Motor neuron (in vitro differentiated cells): ENCODE measurements at regions of chr2 and their contacts with region 1.

Region 1: DNA sequence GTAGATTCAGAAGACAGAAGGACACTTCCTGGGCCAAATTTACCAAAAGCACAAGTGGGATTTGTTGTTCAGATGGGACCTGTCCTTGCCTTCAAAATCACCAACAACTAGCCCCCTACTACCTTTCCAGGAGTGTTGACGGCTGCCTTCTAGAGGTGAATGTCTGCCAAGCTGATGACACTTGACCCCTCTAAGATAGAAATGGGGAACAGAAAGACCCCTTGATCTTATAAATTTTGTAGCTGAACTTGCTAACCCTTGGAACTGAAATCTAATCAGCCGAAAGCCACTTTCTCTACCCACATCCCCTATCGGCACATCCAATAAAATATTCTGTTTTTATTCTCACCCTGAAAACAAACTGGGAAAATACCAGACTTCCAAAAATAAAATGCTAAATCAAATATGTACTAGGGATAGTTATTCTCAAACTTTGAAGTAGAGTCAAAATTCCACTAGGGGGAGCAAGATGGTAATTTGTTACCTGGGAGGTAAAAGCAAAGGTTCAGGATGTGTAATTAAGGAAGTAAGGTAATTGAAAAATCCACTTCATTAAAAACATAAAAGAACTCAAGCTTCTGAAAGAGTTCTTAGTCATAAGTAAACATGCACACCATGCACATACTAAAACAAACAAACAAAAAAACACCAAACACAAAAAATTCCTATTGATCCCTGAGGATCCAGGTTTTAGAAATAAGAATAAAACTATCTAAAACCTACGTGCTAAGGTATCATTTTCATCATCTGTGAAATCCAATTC is 119.2 kb downstream of the ANKRD44 start:
- ATAC-seq: no peak
- H3K4me3 ChIP-seq: no peak overlapping the region
- H3K27ac ChIP-seq: no peak overlapping the region
- H3K4me1 ChIP-seq: no peaks in the 10 kb centered on the region

Region 2: GRCh38 chr2:197310271-197310985 is 119.1 kb after region 1 on chr2 and contains the start of gene ANKRD44:
- in situ Hi-C with region 1: loop called in 1 of 9 experiments (anchors 25 kb)
- ATAC-seq: peak; percentile 90 to 96 (median 94)
- H3K4me3 ChIP-seq: peak within 1 kb of the TSS; percentile 65 to 94 (median 83)
- H3K27ac ChIP-seq: peak within 1 kb of the TSS; percentile 57 to 66
- H3K4me1 ChIP-seq: peaks cover 8 to 11% of the 10 kb centered on the region in 2 donors
- total RNA-seq, gene ANKRD44: 3.4 to 28.8 (median 14.8) TPM

Region 3: GRCh38 chr2:197378494-197379307 is 187.3 kb after region 1 on chr2:
- in situ Hi-C with region 1: loop called in 1 of 9 experiments (anchors 10 kb)
- ATAC-seq: peak; percentile 61 to 77 (median 68)
- H3K4me3 ChIP-seq: no peak overlapping the region
- H3K27ac ChIP-seq: no peak overlapping the region
- H3K4me1 ChIP-seq: peaks cover 0 to 2% of the 10 kb centered on the region in 2 donors